CD8-positive, alpha-beta T cell (primary cell): ENCODE measurements at regions of chr3 and their contacts with region 1.

Region 1: GRCh38 chr3:195271116-195271858 is at the start of gene XXYLT1:
- DNase-seq: peak; percentile 77 to 94 (median 89)
- ATAC-seq: peak; percentile 87
- H3K4me3 ChIP-seq: peak within 1 kb of the TSS; percentile 87
- H3K4me3 Mint-ChIP-seq: peak within 1 kb of the TSS; percentile 86
- H3K27ac ChIP-seq: peak within 1 kb of the TSS; percentile 43 to 59
- H3K27ac Mint-ChIP-seq: peak within 1 kb of the TSS; percentile 69
- H3K4me1 ChIP-seq: peaks cover 21% of the 10 kb centered on the region
- H3K4me1 Mint-ChIP-seq: peaks cover 23% of the 10 kb centered on the region
- H3K27me3 ChIP-seq: no peaks in the 10 kb centered on the region
- H3K27me3 Mint-ChIP-seq: no peaks in the 10 kb centered on the region
- CTCF ChIP-seq: peak; percentile 77
- total RNA-seq, gene XXYLT1: 3.7 to 4.3 TPM

Region 2: GRCh38 chr3:194536871-194537637 is 734.2 kb before region 1 on chr3:
- CTCF ChIA-PET with region 1: no interaction called
- POLR2A ChIA-PET with region 1: no interaction called
- intact Hi-C with region 1: no loop called
- DNase-seq: no peak
- ATAC-seq: no peak
- H3K4me3 ChIP-seq: no peak overlapping the region
- H3K4me3 Mint-ChIP-seq: no peak overlapping the region
- H3K27ac ChIP-seq: no peak overlapping the region
- H3K27ac Mint-ChIP-seq: no peak overlapping the region
- H3K4me1 ChIP-seq: peaks cover 8% of the 10 kb centered on the region
- H3K4me1 Mint-ChIP-seq: peaks cover 8% of the 10 kb centered on the region
- H3K27me3 ChIP-seq: no peaks in the 10 kb centered on the region
- H3K27me3 Mint-ChIP-seq: peaks cover 2% of the 10 kb centered on the region
- CTCF ChIP-seq: no peak

Region 3: DNA sequence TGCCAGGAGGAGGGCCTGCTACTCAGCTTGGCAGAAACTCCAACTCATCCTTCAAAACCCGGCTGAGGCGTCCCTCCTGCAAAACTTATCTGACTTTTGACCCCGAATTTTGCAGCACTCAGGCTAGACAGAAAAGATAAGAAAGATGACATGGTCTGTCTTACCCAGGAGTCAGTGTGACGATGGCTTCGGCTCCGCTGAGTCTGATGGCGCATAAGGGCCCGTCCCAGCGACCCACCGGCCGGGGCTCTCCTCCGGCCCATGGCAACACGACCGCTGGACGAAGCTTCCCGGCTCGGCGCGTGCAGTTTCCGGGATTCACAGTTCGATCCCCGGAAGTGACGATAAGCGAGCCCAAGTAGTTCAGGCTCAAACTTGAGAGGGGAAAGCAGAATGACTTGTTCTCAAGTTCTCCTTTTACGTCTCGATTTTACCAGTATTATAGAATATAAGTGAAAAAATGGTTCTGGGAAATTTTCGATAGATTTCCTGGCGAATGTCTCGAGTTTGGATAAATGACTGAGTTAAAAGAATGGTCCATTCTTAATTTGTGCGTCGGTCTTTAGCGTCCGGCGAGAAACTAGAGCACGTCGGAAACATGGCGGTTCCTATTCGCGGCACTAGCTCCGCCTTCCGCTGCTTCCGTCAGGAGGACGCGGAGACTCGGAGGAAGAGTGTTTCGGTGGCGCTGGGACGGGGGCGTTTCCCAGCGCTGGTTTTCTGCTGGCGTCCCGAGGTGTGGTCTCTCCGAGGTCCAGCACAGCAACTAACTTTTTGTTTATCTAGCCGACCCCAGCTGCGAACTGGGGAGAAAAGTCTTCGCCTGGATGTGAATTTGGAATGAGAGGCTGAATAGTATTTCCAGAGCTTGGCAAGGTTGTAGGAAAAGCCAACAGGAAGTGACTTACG is 599.1 kb before region 1 on chr3 and contains the start of gene LSG1:
- CTCF ChIA-PET with region 1: interaction called, 24 read pairs
- POLR2A ChIA-PET with region 1: interaction called, 13 read pairs
- intact Hi-C with region 1: loop called (anchors 1 kb)
- DNase-seq: peak; percentile 75 to 97 (median 91)
- ATAC-seq: peak; percentile 97
- H3K4me3 ChIP-seq: peak within 1 kb of the TSS; percentile 82 to 83
- H3K4me3 Mint-ChIP-seq: peak within 1 kb of the TSS; percentile 98
- H3K27ac ChIP-seq: peak within 1 kb of the TSS; percentile 88 to 92
- H3K27ac Mint-ChIP-seq: peak within 1 kb of the TSS; percentile 99
- H3K4me1 ChIP-seq: peaks cover 15% of the 10 kb centered on the region
- H3K4me1 Mint-ChIP-seq: peaks cover 45% of the 10 kb centered on the region
- H3K27me3 ChIP-seq: no peaks in the 10 kb centered on the region
- H3K27me3 Mint-ChIP-seq: no peaks in the 10 kb centered on the region
- CTCF ChIP-seq: no peak
- total RNA-seq, gene LSG1: 63.8 to 69.6 TPM

Region 4: DNA sequence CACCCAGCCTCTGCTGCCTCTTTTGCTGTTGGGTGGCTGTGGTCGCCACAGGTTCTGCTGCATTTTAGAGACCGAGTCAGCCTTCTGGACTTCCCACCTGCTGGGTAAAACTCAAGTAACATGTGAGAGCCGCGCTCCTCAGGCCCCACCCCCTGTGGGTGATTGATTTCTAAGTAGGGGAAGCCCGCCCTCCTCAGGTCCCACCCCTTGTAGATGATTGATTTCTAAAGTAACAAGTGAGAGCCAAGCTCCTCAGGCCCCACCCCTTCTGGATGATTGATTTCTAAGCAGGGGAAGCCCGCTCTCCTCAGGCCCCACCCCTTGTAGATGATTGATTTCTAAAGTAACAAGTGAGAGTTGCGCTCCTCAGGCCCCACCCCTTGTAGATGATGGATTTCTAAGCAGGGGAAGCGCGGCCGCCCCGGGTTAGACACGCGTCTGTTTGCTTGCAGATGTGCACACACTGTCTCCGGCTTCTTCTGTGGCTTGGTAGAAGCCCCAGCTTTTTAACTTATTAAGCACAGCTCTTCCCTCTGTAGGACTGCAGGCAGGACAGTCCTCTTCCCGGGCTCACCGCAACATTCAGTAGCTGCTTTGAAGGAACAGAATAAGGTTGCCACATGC is 502.2 kb before region 1 on chr3:
- CTCF ChIA-PET with region 1: no interaction called
- POLR2A ChIA-PET with region 1: no interaction called
- intact Hi-C with region 1: loop called in 1 of 2 experiments (anchors 1 kb)
- DNase-seq: peak; percentile 82 to 98 (median 89)
- ATAC-seq: peak; percentile 96
- H3K4me3 ChIP-seq: peak overlapping the region; percentile 45 to 51
- H3K4me3 Mint-ChIP-seq: peak overlapping the region; percentile 84
- H3K27ac ChIP-seq: peak overlapping the region; percentile 15 to 71
- H3K27ac Mint-ChIP-seq: peak overlapping the region; percentile 92
- H3K4me1 ChIP-seq: peaks cover 11% of the 10 kb centered on the region
- H3K4me1 Mint-ChIP-seq: peaks cover 26% of the 10 kb centered on the region
- H3K27me3 ChIP-seq: peaks cover 0 to 2% of the 10 kb centered on the region in 2 experiments
- H3K27me3 Mint-ChIP-seq: peaks cover 7% of the 10 kb centered on the region
- CTCF ChIP-seq: no peak

Region 5: DNA sequence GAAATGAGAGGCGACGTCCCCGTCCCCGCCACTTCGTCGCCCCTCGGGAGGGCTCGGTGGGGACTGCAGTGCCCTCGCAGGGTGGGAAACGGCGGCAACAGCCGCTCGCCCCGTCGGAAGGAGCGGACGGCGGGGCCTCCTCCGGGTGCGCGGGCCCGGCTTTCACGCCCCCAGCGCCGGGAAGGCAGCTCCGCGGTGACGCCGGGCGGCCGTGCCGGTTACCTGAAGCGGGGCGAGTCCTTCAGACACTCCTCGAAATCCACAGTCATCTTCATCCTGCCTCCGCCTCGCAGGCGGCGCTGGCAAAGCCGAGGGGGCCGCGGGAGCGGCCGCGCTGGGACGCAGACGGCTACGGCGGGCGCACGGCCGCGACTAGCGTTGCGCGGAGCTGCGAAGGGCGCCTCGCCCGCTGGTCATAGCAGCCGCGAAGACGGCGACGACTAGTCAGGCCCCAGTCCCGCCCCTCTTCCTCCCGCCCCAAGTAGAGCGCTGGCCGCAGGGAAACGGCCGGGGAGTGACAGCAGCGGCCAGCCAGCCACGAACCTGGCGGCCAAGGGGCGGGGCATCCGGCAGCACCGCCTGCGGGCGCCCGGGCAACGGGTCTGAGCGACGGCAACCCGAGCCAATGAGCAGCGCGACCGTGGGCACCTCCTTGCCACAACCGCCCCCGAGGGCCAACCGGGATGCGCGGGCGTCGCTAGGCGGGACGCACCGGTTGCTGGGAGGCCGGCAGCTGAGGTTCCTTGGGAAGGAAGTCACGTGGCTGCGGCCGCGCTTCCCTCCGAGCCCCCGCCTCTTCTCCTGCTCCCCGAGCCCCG is 171.5 kb after region 1 on chr3 and contains the start of gene ACAP2:
- CTCF ChIA-PET with region 1: interaction called, 3 read pairs
- POLR2A ChIA-PET with region 1: interaction called, 3 read pairs
- intact Hi-C with region 1: loop called (anchors 1 kb)
- DNase-seq: peak; percentile 95 to 99 (median 99)
- ATAC-seq: peak; percentile 90
- H3K4me3 ChIP-seq: peak within 1 kb of the TSS; percentile 82 to 88
- H3K4me3 Mint-ChIP-seq: peak within 1 kb of the TSS; percentile 95
- H3K27ac ChIP-seq: peak within 1 kb of the TSS; percentile 74 to 82
- H3K27ac Mint-ChIP-seq: peak within 1 kb of the TSS; percentile 92
- H3K4me1 ChIP-seq: peaks cover 39% of the 10 kb centered on the region
- H3K4me1 Mint-ChIP-seq: peaks cover 64% of the 10 kb centered on the region
- H3K27me3 ChIP-seq: no peaks in the 10 kb centered on the region
- H3K27me3 Mint-ChIP-seq: no peaks in the 10 kb centered on the region
- CTCF ChIP-seq: no peak
- total RNA-seq, gene ACAP2: 38.9 to 41.1 TPM

Region 6: GRCh38 chr3:195532834-195533233 is 261.5 kb after region 1 on chr3:
- CTCF ChIA-PET with region 1: interaction called, 18 read pairs
- POLR2A ChIA-PET with region 1: no interaction called
- intact Hi-C with region 1: no loop called
- DNase-seq: no peak
- ATAC-seq: no peak
- H3K4me3 ChIP-seq: no peak overlapping the region
- H3K4me3 Mint-ChIP-seq: peak overlapping the region; percentile 40
- H3K27ac ChIP-seq: no peak overlapping the region
- H3K27ac Mint-ChIP-seq: peak overlapping the region; percentile 69
- H3K4me1 ChIP-seq: peaks cover 75% of the 10 kb centered on the region
- H3K4me1 Mint-ChIP-seq: peaks cover 85% of the 10 kb centered on the region
- H3K27me3 ChIP-seq: no peaks in the 10 kb centered on the region
- H3K27me3 Mint-ChIP-seq: no peaks in the 10 kb centered on the region
- CTCF ChIP-seq: no peak

Region 7: DNA sequence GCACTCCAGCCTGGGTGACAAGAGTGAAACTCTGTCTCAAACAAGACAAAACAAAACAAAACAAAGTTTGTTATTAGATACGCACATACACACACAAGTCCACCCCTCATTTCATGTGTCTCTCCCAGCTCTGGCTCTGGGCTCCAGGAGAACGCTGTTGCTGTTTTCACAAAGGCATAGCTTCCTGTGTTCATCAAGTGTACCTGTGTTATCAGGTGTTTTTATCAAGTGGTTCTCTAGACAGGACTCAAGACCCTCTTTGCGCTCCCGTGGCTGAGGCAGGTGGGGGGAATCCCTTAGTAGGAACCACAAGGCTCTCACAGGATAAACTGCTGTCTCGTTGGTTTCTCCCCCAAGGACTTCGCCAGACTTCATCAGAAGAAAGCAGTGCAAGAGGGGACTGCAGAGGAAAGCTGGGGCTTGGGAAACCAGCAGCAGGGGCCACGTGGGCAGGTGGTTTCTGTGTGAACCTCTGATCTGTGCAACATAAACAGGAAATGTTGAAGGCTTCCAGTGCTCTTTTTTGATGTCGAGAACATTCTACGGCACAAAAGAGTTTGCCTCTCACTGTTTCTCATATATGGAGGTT is 278.7 kb after region 1 on chr3:
- CTCF ChIA-PET with region 1: interaction called, 10 read pairs
- POLR2A ChIA-PET with region 1: interaction called, 9 read pairs
- intact Hi-C with region 1: no loop called
- DNase-seq: peak; percentile 66 to 95 (median 87)
- ATAC-seq: peak; percentile 78
- H3K4me3 ChIP-seq: peak overlapping the region; percentile 37 to 56
- H3K4me3 Mint-ChIP-seq: peak overlapping the region; percentile 82
- H3K27ac ChIP-seq: peak overlapping the region; percentile 83 to 87
- H3K27ac Mint-ChIP-seq: peak overlapping the region; percentile 97
- H3K4me1 ChIP-seq: peaks cover 77% of the 10 kb centered on the region
- H3K4me1 Mint-ChIP-seq: peaks cover 82% of the 10 kb centered on the region
- H3K27me3 ChIP-seq: no peaks in the 10 kb centered on the region
- H3K27me3 Mint-ChIP-seq: no peaks in the 10 kb centered on the region
- CTCF ChIP-seq: no peak

Region 8: DNA sequence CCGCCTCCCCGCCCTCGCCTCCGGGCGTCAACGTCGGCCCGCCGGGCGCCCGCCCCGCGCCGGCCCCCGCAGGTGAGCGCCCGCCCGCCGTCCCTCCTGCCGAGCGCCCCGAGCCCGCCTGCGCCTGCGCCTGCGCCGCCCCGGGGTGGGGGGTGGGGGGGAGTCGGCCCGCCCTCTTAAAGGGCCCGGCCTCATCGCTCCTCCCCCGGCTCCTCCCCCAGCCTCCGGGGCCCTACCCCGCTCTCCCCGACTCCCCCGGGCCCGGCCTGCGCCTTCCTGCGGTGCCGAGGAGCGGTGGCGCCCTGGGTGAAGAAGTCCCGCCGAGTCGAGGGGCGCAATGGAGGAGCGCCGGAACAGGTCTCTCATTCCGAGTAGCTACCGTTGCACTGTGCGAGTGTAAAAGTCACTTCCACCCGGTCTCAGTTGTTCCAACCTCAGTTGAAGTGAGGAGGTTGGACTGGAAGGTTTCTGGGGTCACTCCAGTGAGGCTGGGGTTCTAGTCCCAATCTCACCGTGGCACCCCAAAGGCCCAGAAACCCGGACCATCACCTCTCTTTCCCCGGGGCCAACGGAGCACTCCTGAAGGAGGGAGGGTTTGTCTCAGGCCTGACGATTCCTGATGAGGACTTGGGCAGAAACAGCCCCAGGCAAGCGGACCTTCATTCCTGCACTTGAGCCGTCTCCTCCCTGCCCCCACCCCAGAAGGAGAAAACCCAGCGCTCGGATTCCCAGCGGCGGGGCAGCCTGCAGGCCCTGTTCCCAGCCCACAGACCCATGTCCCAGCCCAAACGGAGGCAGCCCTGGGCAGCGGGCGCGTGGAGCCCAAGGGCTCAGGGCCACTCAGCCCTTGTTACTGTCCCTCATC is 638.6 kb after region 1 on chr3:
- CTCF ChIA-PET with region 1: interaction called, 3 read pairs
- POLR2A ChIA-PET with region 1: no interaction called
- intact Hi-C with region 1: loop called (anchors 2 to 5 kb)
- DNase-seq: peak; percentile 79 to 95 (median 90)
- ATAC-seq: peak; percentile 61
- H3K4me3 ChIP-seq: peak overlapping the region; percentile 32 to 52
- H3K4me3 Mint-ChIP-seq: peak overlapping the region; percentile 77
- H3K27ac ChIP-seq: peak overlapping the region; percentile 35 to 51
- H3K27ac Mint-ChIP-seq: peak overlapping the region; percentile 78
- H3K4me1 ChIP-seq: peaks cover 37% of the 10 kb centered on the region
- H3K4me1 Mint-ChIP-seq: peaks cover 36% of the 10 kb centered on the region
- H3K27me3 ChIP-seq: no peaks in the 10 kb centered on the region
- H3K27me3 Mint-ChIP-seq: no peaks in the 10 kb centered on the region
- CTCF ChIP-seq: no peak